GM12878 (cell line): ENCODE measurements at regions of chr10 and their contacts with region 1.

Region 1: GRCh38 chr10:117674646-117675045 is 132.1 kb downstream of the EMX2 start:
- DNase-seq: no peak
- ATAC-seq: no peak
- H3K4me3 ChIP-seq: no peak overlapping the region
- H3K27ac ChIP-seq: no peak overlapping the region
- H3K4me1 ChIP-seq: no peaks in the 10 kb centered on the region
- H3K27me3 ChIP-seq: peaks cover 0 to 3% of the 10 kb centered on the region in 2 experiments; a peak in 1 of 4 replicates
- CTCF ChIP-seq: no peak
- EP300 ChIP-seq: no peak
- POLR2A ChIP-seq: no peak
- RAD21 ChIP-seq: no peak

Region 2: GRCh38 chr10:117616179-117616578 is 58.5 kb before region 1 on chr10:
- CTCF ChIA-PET with region 1: no interaction called
- POLR2A ChIA-PET with region 1: interaction called, 4 read pairs
- RAD21 ChIA-PET with region 1: no interaction called
- SMC1A ChIA-PET with region 1: interaction called, 18 read pairs
- in situ Hi-C with region 1: no loop called
- intact Hi-C with region 1: no loop called
- DNase-seq: peak; percentile 23
- ATAC-seq: peak; percentile 76
- H3K4me3 ChIP-seq: no peak overlapping the region
- H3K27ac ChIP-seq: no peak overlapping the region
- H3K4me1 ChIP-seq: peaks cover 7% of the 10 kb centered on the region
- H3K27me3 ChIP-seq: no peaks in the 10 kb centered on the region
- CTCF ChIP-seq: no peak
- EP300 ChIP-seq: peak in 1 of 2 experiments; percentile 78; a peak in 1 of 4 replicates
- POLR2A ChIP-seq: no peak
- RAD21 ChIP-seq: no peak

Region 3: DNA sequence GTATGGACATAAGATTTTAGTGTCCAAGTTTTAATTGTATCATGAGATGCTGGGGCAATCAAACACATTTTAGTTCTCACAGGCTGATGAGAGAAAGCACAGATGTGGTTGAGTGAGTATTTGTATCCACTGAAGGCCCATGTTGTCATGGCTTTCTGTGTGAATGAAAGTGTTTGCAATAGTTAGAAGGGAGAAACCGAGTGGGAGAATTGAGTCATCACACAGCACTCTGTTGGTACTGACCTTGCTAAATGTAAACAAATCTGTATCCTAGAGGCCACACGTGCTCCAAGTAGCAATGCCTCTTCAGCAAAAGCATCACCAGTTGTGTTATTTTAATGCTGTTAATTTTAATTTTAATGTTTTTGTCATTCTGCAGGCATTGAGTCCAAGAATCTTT is 10.9 kb before region 1 on chr10:
- CTCF ChIA-PET with region 1: interaction called, 3 read pairs
- POLR2A ChIA-PET with region 1: interaction called, 3 read pairs
- RAD21 ChIA-PET with region 1: interaction called, 12 read pairs
- SMC1A ChIA-PET with region 1: interaction called, 21 read pairs
- in situ Hi-C with region 1: no loop called
- intact Hi-C with region 1: no loop called
- DNase-seq: peak; percentile 83
- ATAC-seq: peak; percentile 99
- H3K4me3 ChIP-seq: no peak overlapping the region
- H3K27ac ChIP-seq: no peak overlapping the region; the same call in 1 of the 2 replicates
- H3K4me1 ChIP-seq: peaks cover 8% of the 10 kb centered on the region
- H3K27me3 ChIP-seq: no peaks in the 10 kb centered on the region
- CTCF ChIP-seq: no peak
- EP300 ChIP-seq: peak; percentile 89 to 99
- POLR2A ChIP-seq: no peak
- RAD21 ChIP-seq: peak; percentile 18; the same call in 1 of the 2 replicates

Region 4: DNA sequence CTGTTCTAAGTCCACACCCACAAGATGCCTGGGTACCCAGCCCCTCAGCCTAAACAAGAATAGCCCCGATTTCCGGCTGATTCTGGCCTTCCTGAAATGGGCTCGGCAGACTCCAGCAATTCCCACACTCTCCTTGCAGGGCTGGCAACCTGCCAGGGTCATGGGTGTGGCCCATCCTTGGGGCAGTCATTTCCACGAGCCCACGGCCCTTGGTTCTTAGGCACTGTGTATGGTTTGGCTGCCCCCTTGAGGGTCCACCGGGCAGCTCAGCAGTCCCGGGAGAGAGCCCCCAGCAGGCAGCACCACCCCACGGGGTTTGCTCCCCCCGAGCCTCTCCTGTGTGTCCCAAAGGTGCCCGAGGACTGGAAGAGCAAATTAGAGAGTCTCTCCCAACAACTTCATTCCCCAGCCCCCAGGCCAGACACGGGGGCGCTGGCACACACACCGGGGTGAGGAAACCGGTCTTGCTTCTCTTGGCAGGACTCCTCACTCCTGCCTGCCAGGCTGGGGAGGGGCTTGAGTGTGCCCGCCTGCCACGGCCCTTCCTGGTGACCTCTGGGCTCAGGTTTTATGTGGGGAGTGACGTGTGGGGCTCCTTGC is 10.1 kb after region 1 on chr10:
- CTCF ChIA-PET with region 1: interaction called, 3 read pairs
- POLR2A ChIA-PET with region 1: no interaction called
- RAD21 ChIA-PET with region 1: interaction called, 6 read pairs
- SMC1A ChIA-PET with region 1: interaction called, 10 read pairs
- in situ Hi-C with region 1: no loop called
- intact Hi-C with region 1: no loop called
- DNase-seq: no peak
- ATAC-seq: peak; percentile 68
- H3K4me3 ChIP-seq: no peak overlapping the region
- H3K27ac ChIP-seq: no peak overlapping the region
- H3K4me1 ChIP-seq: no peaks in the 10 kb centered on the region
- H3K27me3 ChIP-seq: peaks cover 0 to 12% of the 10 kb centered on the region in 2 experiments; a peak in 1 of 4 replicates
- CTCF ChIP-seq: peak; percentile 19 to 41 (median 39); a peak in 4 of 6 replicates
- EP300 ChIP-seq: no peak
- POLR2A ChIP-seq: no peak
- RAD21 ChIP-seq: peak; percentile 63